ENCODE measurements at regions of chr3 and their contacts with region 1.

Region 1: DNA sequence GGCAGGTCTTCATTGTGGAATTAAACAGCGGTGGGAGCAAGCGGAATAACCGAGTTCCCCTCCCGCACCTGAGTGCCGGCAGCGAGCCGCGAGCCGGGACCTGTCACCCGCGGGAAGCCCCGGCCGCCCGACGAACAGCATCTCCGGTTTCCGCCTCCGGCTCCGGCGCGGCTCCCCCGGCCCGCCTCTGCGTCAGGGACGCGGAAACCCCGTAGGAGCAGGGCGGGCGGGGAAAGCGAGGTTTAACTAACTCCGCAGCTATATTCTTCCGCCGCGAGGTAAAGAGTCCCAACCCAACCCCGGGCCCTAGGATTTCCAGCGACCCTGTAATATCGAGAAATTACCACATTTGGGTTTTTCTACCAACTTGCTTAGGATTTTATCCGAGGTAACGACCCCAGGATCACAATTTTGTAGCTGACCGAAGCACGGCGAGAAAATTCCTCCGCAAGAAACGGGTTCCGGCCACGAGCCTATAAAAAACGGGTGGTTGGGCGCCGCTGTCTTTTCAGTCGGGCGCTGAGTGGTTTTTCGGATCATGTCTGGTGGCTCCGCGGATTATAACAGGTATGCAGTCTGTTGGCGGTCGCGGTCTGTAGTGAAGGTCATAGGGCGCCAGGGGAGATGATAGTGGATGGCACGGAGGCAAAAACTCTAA is at the start of gene EIF4A2:
- DNase-seq: peak; percentile 92
- ATAC-seq: peak; percentile 66
- H3K4me3 Mint-ChIP-seq: peak within 1 kb of the TSS; percentile 100
- H3K27ac Mint-ChIP-seq: peak within 1 kb of the TSS; percentile 99
- H3K4me1 Mint-ChIP-seq: peaks cover 39% of the 10 kb centered on the region
- H3K27me3 Mint-ChIP-seq: no peaks in the 10 kb centered on the region
- total RNA-seq, gene EIF4A2: 479 to 483 TPM

Region 2: GRCh38 chr3:186472456-186473008 is 310.7 kb before region 1 on chr3:
- POLR2A ChIA-PET with region 1: no interaction called
- DNase-seq: no peak
- ATAC-seq: no peak
- H3K4me3 Mint-ChIP-seq: no peak overlapping the region
- H3K27ac Mint-ChIP-seq: no peak overlapping the region
- H3K4me1 Mint-ChIP-seq: no peaks in the 10 kb centered on the region
- H3K27me3 Mint-ChIP-seq: peaks cover 4% of the 10 kb centered on the region

Region 3: DNA sequence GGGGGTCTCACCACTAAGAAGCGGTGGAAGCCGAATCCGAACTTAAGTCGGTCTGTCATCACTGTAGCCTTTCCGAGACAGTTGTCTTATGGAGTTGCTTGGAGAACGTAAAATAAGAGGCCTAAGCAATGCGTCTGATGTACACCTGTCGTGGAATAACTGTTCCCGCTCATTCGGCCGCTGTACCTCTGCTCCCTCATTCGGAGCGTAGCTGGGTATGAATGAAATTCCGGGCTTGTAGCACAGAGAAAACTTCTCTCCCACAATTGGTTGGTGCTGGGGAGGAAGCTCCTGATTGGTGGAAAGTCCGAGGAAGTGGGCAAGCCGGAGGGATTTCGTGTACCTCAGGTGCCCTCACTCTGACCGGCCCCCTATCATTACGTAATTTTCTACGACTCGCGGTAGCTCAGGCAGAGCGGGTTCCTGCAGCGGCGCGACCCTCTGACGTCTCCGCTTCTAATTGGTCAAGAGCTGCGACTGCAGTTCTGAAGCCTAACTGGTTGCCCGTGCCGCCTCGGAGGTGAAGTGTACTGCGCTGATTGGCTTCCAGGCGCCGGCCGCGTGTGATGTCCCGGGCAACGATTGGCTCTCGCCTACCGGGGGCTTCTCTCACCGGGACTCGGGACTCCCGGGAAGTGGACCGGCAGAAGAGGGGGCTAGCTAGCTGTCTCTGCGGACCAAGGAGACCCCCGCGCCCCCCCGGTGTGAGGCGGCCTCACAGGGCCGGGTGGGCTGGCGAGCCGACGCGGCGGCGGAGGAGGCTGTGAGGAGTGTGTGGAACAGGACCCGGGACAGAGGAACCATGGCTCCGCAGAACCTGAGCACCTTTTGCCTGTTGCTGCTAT is 212.9 kb before region 1 on chr3 and contains the start of gene DNAJB11:
- POLR2A ChIA-PET with region 1: interaction called, 32 read pairs
- DNase-seq: peak; percentile 95
- ATAC-seq: peak; percentile 89
- H3K4me3 Mint-ChIP-seq: peak within 1 kb of the TSS; percentile 96
- H3K27ac Mint-ChIP-seq: peak within 1 kb of the TSS; percentile 99
- H3K4me1 Mint-ChIP-seq: peaks cover 32% of the 10 kb centered on the region
- H3K27me3 Mint-ChIP-seq: no peaks in the 10 kb centered on the region
- total RNA-seq, gene DNAJB11: 37.0 to 41.2 TPM

Region 4: GRCh38 chr3:186722456-186722855 is 60.7 kb before region 1 on chr3:
- POLR2A ChIA-PET with region 1: no interaction called
- DNase-seq: no peak
- ATAC-seq: no peak
- H3K4me3 Mint-ChIP-seq: no peak overlapping the region
- H3K27ac Mint-ChIP-seq: no peak overlapping the region
- H3K4me1 Mint-ChIP-seq: no peaks in the 10 kb centered on the region
- H3K27me3 Mint-ChIP-seq: peaks cover 11% of the 10 kb centered on the region

Region 5: GRCh38 chr3:186772701-186773424 is 10.3 kb before region 1 on chr3:
- POLR2A ChIA-PET with region 1: interaction called, 117 read pairs
- DNase-seq: peak; percentile 74
- ATAC-seq: peak; percentile 96
- H3K4me3 Mint-ChIP-seq: peak overlapping the region; percentile 96
- H3K27ac Mint-ChIP-seq: peak overlapping the region; percentile 97
- H3K4me1 Mint-ChIP-seq: peaks cover 17% of the 10 kb centered on the region
- H3K27me3 Mint-ChIP-seq: no peaks in the 10 kb centered on the region

Region 6: DNA sequence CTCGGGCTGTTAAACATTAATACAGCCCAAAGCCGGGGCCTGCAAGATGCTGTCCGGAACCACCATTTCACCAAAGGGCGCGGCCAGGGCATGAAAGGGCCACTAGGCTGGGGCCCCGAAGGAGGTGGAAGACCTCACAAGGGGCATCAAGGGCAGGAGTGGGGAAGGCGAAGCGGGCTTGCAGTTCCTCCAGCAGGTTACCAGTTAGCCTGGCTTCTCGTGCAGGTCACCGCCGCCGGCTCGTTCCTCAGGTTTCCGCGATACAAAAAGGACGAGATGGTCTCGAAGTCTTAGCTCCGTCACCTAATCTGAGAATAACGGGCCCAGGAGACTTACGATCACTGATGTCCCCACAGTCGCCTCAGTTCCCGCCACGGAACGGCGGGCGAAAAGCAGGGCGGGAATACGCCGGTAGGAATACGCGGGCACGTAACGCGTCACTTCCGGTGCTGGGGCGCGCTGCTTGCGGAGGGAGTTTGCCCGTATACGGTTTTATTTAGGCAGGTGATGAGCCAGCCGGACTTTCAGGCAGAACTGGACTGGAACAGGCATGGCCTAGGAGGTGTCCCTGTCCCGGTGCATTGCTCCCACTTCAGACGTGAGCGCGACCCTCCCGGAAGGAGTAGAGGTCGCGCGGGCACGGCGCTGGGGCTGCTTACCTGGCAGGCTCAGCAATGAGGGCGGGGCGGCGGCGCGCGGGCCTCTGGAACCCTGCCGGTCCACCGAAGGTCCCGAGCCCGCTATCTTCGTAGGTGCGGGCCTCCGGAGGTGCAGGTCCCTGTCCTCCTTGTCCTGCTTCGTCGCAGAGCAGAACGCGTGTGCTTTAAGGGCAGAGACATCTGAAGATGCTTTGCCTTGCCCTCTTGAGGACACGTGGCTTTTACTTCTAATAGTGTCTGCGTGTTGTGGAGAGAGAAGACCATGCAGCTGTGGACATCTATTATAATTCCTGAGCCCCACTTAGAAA is 23.2 kb after region 1 on chr3 and contains the start of gene RFC4:
- POLR2A ChIA-PET with region 1: interaction called, 91 read pairs
- DNase-seq: peak; percentile 87
- ATAC-seq: peak; percentile 81
- H3K4me3 Mint-ChIP-seq: peak within 1 kb of the TSS; percentile 92
- H3K27ac Mint-ChIP-seq: peak within 1 kb of the TSS; percentile 85
- H3K4me1 Mint-ChIP-seq: peaks cover 29% of the 10 kb centered on the region
- H3K27me3 Mint-ChIP-seq: no peaks in the 10 kb centered on the region
- total RNA-seq, gene RFC4: 75.2 to 77.6 TPM

Region 7: DNA sequence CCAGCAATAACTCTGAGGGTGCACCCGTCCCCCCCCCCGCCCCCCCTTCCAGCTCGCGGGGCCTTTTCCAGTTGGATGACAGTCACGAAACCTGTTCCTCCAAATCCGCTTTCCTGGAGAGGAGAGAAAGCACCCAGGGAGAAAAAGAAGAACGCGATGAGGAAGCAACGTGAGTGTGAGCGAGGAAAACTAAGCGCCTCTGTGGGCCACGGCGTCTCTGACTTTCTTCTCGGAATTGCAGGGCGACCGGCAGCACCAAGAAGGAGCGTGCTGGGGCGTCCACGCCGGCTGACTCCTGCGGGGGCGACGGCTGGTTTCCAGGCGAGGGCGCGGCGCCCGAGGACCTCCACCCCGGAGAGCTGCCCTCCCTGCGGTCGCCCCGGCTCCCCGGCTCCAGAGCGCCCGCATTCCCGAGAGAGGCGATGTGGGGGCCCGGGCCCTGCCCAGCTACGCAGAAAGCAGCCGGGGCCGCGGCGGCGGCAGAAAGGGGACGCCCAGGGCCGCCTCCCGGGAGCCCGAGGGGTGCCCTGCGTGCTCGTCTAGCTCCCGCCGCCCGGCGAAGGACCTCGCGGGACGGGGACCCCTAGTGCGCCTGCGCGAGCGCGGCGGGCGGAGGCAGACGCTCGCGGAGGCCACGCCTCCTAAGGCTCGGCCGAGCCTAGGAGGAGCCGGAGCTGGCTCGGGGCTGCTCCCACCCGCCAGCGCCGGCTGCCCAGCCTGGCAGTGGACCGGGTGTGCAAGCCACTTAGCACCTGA is 44.0 kb after region 1 on chr3:
- POLR2A ChIA-PET with region 1: interaction called, 28 read pairs
- DNase-seq: peak; percentile 94
- ATAC-seq: peak; percentile 92
- H3K4me3 Mint-ChIP-seq: peak overlapping the region; percentile 83
- H3K27ac Mint-ChIP-seq: peak overlapping the region; percentile 67
- H3K4me1 Mint-ChIP-seq: peaks cover 24% of the 10 kb centered on the region
- H3K27me3 Mint-ChIP-seq: peaks cover 45% of the 10 kb centered on the region

Region 8: GRCh38 chr3:187025656-187026316 is 242.6 kb after region 1 on chr3:
- POLR2A ChIA-PET with region 1: interaction called, 11 read pairs
- DNase-seq: peak; percentile 53
- ATAC-seq: peak; percentile 22
- H3K4me3 Mint-ChIP-seq: peak overlapping the region; percentile 88
- H3K27ac Mint-ChIP-seq: peak overlapping the region; percentile 97
- H3K4me1 Mint-ChIP-seq: peaks cover 50% of the 10 kb centered on the region
- H3K27me3 Mint-ChIP-seq: no peaks in the 10 kb centered on the region

Measured in activated naive CD8-positive, alpha-beta T cell treated with anti-CD3 and anti-CD28 coated beads, Interleukin-2, amount 10 ng/mL, durations not matched to agents 7 days and 5 days (primary cell).